Brain microvascular endothelial cell (primary cell): ENCODE measurements at regions of chr5 and their contacts with region 1.

Region 1: DNA sequence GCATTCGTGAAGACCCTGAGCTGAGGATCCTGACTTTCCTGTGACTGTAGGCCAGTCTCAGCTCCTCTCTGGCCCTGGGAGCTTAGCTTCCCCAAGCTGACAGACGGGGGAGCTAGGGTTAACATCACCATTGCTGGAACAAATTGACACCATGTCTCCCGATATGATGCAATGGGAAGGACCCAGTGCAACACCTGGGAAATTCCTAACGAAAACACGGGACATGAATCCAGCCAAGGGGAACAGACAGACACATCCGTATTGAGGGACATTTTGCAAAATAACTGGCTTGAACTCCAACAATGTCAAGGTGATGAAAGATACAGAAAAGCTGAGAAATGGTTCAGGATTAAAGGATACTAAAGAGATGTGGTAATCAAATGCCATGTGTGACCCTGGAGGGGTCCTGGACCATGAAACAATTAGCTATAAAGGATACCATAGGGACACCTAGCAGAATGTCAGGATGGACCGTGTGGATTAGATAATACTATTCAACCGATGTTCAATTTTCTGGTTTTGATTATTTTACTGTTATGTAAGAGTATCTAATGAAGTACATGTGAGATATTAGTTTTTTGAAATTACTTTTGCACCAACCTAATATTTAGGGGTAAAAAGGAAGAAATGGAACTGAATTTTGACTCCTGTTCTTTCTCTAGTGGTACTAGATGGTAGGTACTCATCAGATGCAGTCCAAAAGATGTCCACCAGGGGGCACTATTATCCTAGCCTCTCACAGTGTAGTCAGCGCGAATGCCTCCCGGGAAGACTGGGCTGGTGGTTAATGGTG is 52.7 kb downstream of the NDST1 start:
- DNase-seq: peak; percentile 93
- H3K4me3 ChIP-seq: no peak overlapping the region
- H3K27ac ChIP-seq: no peak overlapping the region
- H3K27me3 ChIP-seq: no peaks in the 10 kb centered on the region
- CTCF ChIP-seq: peak; percentile 84

Region 2: DNA sequence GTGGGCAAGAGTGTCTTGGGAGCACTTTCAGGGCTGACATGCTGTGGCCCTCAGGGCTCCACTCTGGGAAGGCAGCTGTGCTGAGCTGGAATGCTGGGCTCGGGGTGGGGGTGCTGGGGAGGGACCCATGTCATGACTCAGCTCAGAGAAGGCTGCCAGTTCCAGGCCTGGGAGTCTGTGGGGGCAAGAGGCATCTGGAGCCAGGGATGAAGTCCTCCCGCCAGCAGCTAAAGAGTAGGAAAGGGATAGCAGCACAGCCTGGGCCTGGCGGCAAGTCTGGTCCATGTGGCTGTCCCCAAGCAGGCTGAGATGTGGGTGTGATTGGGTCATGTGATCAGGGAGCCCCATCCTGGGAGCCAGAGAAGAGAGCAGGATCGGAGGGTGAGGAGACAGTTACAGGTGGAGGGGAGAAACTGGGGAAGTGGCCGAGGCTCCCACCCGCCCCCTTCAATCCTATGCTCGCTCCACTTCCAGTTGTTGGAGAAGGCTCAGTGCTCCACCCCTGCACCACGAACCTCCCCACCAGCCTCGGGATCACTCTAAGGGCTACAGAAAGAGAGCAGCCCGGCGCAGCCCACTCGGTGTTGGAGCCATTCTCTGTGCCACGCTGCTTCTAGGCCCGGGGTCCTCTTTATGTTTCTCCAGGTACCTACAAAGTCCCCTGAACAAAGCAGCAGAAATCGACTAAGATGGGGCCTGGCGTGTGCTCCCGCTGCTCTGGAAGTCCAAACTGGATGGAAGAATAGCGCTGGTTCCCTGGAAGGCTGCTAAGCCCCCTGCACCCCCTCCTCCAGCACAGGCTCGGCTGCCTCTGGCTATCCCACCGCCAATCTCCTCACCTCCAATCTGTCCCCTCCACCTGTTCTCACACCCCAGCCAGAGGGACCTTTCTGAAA is 417.0 kb before region 1 on chr5:
- in situ Hi-C with region 1: no loop called
- DNase-seq: peak; percentile 89
- H3K4me3 ChIP-seq: peak overlapping the region; percentile 3
- H3K27ac ChIP-seq: peak overlapping the region; percentile 94
- H3K27me3 ChIP-seq: no peaks in the 10 kb centered on the region
- CTCF ChIP-seq: no peak

Region 3: DNA sequence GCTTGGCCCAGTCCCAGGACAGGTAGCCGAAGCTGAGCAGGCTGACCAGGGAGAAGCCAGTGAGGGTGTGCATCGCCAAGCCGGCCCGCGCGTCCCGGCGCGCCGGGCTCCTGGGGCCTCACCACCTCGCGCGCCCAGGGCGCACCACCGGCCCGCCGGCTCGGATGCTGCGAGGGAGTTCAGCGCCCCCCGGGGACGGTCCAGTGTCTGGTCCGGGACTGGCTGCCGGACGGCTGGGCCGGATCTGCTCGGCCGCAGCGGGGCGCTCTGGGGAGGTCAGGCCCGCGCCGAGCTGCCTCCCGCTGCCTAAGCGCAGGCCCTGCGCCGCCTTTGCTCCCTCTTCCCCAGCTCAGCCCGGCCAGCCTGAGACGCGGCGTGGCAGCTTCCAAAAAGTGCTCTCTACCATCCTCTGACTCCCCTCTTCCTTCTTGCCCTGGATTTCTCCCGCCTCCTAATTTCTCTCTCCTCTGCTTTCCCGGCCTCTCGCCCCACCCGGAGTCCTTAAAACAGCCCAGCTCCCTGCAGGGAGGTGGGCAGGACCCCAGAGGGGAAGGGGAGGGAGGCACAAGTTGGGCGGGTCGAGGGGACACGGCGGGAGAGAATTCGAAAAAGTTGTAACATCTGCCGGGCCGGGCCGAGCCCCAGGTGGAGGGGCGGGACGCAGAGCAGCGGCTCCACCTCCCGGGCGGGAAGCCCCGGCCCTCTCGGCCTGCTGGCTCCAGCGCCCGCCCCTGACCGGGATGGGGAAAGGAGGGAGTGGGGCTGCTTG is 258.1 kb before region 1 on chr5 and contains the start of gene ARSI:
- in situ Hi-C with region 1: no loop called
- DNase-seq: no peak
- H3K4me3 ChIP-seq: peak within 1 kb of the TSS; percentile 50
- H3K27ac ChIP-seq: no peak within 1 kb of the TSS
- H3K27me3 ChIP-seq: no peaks in the 10 kb centered on the region
- CTCF ChIP-seq: peak; percentile 24

Region 4: DNA sequence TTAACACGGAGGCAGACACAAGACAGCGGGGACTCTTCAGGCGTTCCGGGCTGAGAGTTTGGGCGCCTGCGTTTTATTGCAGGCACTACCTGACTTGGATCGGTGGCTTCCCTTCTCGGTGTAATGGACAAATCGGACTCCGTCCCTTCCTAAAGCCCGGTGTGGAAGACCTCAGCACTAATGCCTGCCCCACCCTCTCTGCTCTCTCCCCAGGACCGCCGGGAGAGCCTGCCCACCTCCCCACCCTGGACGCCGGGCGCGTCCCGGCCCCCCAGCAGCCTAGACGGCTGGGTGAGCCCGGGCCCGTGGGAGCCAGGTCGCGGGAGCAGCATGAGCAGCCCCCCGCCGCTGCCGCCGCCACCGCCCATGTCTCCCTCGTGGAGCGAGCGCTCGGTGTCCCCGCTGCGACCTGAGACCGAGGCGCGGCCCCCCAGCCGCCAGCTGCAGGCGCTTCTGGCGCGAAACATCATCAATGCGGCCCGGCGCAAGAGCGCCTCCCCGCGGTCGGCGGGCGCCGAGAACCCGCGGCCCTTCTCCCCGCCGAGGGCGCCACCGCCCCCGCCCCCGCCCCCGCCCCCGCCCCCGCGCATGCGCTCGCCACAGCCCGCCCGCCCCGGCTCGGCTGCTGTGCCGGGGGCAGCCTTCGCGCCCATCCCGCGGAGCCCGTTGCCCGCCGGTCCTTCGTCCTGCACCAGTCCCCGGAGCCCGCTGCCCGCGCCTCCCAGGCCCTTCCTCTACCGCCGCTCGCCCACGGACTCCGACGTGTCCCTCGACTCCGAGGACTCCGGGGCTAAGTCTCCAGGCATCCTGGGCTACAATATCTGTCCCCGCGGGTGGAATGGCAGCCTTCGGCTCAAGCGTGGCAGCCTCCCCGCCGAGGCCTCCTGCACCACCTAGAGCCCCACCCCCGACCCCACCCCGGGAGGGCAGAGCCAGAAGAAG is 95.9 kb after region 1 on chr5:
- in situ Hi-C with region 1: loop called (anchors 25 kb)
- DNase-seq: no peak
- H3K4me3 ChIP-seq: peak overlapping the region; percentile 54
- H3K27ac ChIP-seq: no peak overlapping the region
- H3K27me3 ChIP-seq: peaks cover 3% of the 10 kb centered on the region
- CTCF ChIP-seq: peak; percentile 61